ENCODE measurements at regions of chr6 and their contacts with region 1.

Region 1: GRCh38 chr6:42315991-42316378 is 98.3 kb upstream of the MRPS10 start:
- DNase-seq: peak; percentile 91 to 97 (median 92)
- H3K4me3 ChIP-seq: no peak overlapping the region
- H3K4me3 Mint-ChIP-seq: peak overlapping the region in 1 of 2 donors; percentile 55
- H3K27ac ChIP-seq: peak overlapping the region; percentile 96 to 100
- H3K27ac Mint-ChIP-seq: peak overlapping the region; percentile 99 to 100 (median 100)
- H3K4me1 ChIP-seq: peaks cover 49 to 67% of the 10 kb centered on the region in 2 donors
- H3K4me1 Mint-ChIP-seq: peaks cover 74% of the 10 kb centered on the region
- H3K27me3 ChIP-seq: no peaks in the 10 kb centered on the region
- H3K27me3 Mint-ChIP-seq: peaks cover 0 to 2% (median 0%) of the 10 kb centered on the region in 3 donors
- CTCF ChIP-seq: no peak

Region 2: GRCh38 chr6:42294759-42295158 is 21.2 kb before region 1 on chr6:
- intact Hi-C with region 1: loop called in 1 of 2 experiments (anchors 2 kb)
- DNase-seq: peak; percentile 51 to 72 (median 53)
- H3K4me3 ChIP-seq: no peak overlapping the region
- H3K4me3 Mint-ChIP-seq: no peak overlapping the region
- H3K27ac ChIP-seq: peak overlapping the region in 1 of 2 donors; percentile 43
- H3K27ac Mint-ChIP-seq: peak overlapping the region in 6 of 7 donors; percentile 11 to 88 (median 78)
- H3K4me1 ChIP-seq: peaks cover 22 to 34% of the 10 kb centered on the region in 2 donors
- H3K4me1 Mint-ChIP-seq: peaks cover 35% of the 10 kb centered on the region
- H3K27me3 ChIP-seq: no peaks in the 10 kb centered on the region
- H3K27me3 Mint-ChIP-seq: no peaks in the 10 kb centered on the region
- CTCF ChIP-seq: no peak

Region 3: GRCh38 chr6:42407379-42407778 is 91.4 kb after region 1 on chr6:
- intact Hi-C with region 1: loop called in 1 of 2 experiments (anchors 5 kb)
- DNase-seq: peak; percentile 66 to 93 (median 72)
- H3K4me3 ChIP-seq: peak overlapping the region in 1 of 3 experiments; percentile 12
- H3K4me3 Mint-ChIP-seq: no peak overlapping the region
- H3K27ac ChIP-seq: peak overlapping the region; percentile 20 to 67
- H3K27ac Mint-ChIP-seq: peak overlapping the region in 6 of 7 donors; percentile 63 to 90 (median 80)
- H3K4me1 ChIP-seq: peaks cover 80 to 89% of the 10 kb centered on the region in 2 donors
- H3K4me1 Mint-ChIP-seq: peaks cover 80% of the 10 kb centered on the region
- H3K27me3 ChIP-seq: no peaks in the 10 kb centered on the region
- H3K27me3 Mint-ChIP-seq: no peaks in the 10 kb centered on the region
- CTCF ChIP-seq: no peak